ENCODE measurements at regions of chr1 and their contacts with region 1.

Region 1: DNA sequence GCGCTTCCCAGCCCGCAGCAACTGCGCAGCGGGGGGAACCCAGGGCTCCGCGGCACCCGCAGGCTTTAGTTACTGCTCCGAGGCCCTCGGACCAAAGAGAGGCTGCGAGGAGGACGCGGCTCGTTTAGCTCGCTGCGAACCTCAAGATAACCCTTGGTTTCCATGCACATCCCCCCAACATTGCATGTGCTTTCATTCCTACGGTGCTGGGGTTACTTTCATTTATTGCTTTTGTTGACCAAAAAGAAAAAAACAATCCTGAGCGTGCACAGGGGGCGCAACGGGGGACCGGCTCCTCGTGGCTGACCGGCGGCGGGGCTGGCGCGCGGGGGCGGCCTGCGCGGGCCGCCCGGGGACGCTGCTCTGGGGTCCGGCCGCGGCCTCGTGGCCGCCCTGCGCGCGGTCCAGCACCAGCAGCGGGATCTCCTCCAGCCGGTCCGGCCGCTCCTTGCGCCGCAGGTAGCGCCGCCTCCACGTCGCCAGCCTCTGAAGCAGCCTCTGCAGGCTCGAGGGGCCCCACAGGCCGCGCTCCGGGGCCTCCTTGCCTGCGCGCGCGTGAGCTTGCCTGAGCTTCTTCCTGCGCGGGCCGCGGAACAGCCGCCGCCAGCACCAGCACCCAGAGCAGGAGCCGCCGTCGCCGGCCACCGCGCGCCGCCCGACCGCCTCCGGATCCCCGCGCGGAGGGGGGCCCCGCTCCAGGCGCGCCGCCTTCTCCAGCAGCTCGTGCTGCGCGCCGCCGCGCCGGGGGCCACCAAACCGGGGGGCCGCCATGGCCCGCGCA is 77.4 kb downstream of the DESI2 start:
- DNase-seq: peak; percentile 67 to 78
- H3K4me3 ChIP-seq: peak overlapping the region; percentile 63
- H3K4me3 Mint-ChIP-seq: peak overlapping the region; percentile 83
- H3K27ac Mint-ChIP-seq: peak overlapping the region; percentile 86
- H3K4me1 ChIP-seq: peaks cover 13% of the 10 kb centered on the region
- H3K4me1 Mint-ChIP-seq: peaks cover 7% of the 10 kb centered on the region
- H3K27me3 ChIP-seq: no peaks in the 10 kb centered on the region
- H3K27me3 Mint-ChIP-seq: no peaks in the 10 kb centered on the region
- CTCF ChIP-seq: no peak

Region 2: DNA sequence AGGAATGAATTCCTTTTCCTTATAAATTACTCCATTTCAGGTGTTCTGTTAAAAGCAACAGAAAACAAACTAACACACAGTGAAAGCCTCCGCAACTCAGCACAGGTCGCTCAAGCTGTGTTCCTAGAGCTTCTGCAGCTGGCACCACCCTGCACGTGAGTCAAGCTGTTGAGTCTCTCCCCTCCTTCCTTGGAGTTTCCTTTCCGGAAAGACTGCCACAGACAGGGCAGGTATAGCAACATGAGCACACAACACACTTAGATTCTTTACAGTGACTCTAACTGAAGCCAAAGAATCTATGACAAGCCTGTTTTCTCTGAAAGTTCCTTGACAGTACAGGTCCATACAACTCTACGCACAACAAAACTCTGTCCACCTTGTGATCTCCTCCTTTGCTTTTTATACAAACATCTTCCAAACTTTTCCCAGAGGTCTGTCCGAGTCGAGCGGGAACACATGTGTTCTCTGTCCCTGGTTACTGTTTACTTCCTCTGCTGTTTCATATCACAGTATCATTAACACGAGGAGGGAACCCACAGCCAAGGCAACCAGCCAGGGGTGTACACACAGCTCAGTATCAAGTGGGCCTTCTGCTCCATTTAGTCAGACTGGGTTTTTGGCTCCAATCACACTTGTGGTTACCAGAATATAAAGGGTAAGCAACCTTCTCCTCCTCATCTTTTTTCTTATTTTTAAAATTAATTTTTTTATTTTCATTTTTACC is 116.1 kb before region 1 on chr1:
- CTCF ChIA-PET with region 1: no interaction called
- POLR2A ChIA-PET with region 1: no interaction called
- intact Hi-C with region 1: loop called (anchors 10 kb)
- DNase-seq: no peak
- H3K4me3 ChIP-seq: no peak overlapping the region
- H3K4me3 Mint-ChIP-seq: no peak overlapping the region
- H3K27ac Mint-ChIP-seq: no peak overlapping the region
- H3K4me1 ChIP-seq: peaks cover 10% of the 10 kb centered on the region; the same call in 1 of the 2 replicates
- H3K4me1 Mint-ChIP-seq: peaks cover 18% of the 10 kb centered on the region
- H3K27me3 ChIP-seq: no peaks in the 10 kb centered on the region
- H3K27me3 Mint-ChIP-seq: no peaks in the 10 kb centered on the region
- CTCF ChIP-seq: no peak

Region 3: GRCh38 chr1:244762629-244763028 is 32.3 kb after region 1 on chr1:
- CTCF ChIA-PET with region 1: no interaction called
- POLR2A ChIA-PET with region 1: no interaction called
- intact Hi-C with region 1: no loop called
- DNase-seq: no peak
- H3K4me3 ChIP-seq: no peak overlapping the region
- H3K4me3 Mint-ChIP-seq: no peak overlapping the region
- H3K27ac Mint-ChIP-seq: no peak overlapping the region
- H3K4me1 ChIP-seq: no peaks in the 10 kb centered on the region
- H3K4me1 Mint-ChIP-seq: no peaks in the 10 kb centered on the region
- H3K27me3 ChIP-seq: no peaks in the 10 kb centered on the region
- H3K27me3 Mint-ChIP-seq: peaks cover 2% of the 10 kb centered on the region
- CTCF ChIP-seq: no peak

Region 4: DNA sequence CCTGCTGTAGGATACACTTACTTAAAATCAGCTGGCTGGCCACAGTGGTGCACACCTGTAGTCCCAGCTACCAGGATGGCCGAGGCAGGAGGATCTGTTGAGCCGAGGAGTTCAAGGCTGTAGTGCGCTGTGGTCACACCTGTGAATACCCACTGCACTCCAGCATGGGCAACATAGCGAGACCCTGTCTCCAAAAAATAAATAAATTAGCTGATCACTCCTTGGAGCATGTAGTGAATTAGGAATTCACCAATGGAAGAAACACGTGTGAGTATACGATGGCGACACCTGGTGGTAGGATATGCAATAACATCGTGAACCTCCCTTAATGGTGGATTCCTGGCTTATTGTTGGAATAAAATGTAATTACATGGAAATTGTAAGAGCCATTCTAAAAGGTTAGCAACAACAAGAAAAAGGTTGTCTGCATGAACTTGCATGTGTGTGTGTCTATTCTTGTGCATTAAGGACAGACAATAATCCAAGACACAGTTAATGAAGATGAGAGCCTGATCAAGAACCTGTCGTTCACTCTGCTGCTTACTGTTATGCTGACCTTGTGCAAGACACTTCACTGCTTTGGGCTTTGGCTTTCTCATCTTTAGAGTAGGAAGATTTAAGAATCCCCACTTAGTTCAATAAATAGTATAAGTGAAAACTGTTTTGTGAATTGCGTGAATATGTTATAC is 66.5 kb after region 1 on chr1:
- CTCF ChIA-PET with region 1: no interaction called
- POLR2A ChIA-PET with region 1: no interaction called
- intact Hi-C with region 1: no loop called
- DNase-seq: peak; percentile 63 to 74
- H3K4me3 ChIP-seq: no peak overlapping the region
- H3K4me3 Mint-ChIP-seq: no peak overlapping the region
- H3K27ac Mint-ChIP-seq: no peak overlapping the region
- H3K4me1 ChIP-seq: peaks cover 3% of the 10 kb centered on the region
- H3K4me1 Mint-ChIP-seq: peaks cover 9% of the 10 kb centered on the region
- H3K27me3 ChIP-seq: no peaks in the 10 kb centered on the region
- H3K27me3 Mint-ChIP-seq: no peaks in the 10 kb centered on the region
- CTCF ChIP-seq: peak; percentile 76 to 86